Activated B cell treated with CpG ODN at 0.5 μM for 24 hours (primary cell): ENCODE measurements at regions of chr19 and their contacts with region 1.

Region 1: DNA sequence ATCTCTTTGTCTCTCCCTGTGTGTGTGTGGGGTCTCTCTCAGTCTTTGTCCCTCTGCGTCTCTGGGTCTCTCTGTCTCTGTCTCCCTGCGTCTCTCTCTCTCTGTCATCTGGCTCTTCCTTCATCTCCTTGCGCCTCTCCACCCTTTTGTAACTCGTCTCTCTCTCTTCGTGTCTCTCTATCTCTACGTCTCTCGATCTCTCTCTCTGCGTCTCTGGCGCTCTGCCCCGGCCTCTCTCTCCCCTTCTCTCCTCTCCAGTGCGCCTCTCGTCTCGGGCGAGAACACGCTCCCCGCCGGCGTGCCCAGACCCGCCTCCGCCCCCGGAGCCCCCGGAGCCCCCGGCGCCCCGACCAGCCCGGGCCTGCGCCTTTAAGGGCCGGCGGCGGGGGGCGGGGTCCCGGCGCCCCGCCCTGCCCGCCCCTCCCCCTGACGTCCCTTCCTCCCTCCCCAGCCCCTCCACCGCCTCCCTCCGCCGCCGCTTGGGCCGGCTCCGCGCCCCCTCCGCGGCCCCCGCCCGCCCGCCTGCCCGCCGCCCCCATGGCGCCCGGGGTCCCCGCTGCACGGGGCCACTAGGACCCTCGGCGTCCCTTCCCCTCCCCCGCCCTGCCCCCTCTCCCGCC is at the start of gene MARK4:
- DNase-seq: peak; percentile 56
- ATAC-seq: peak; percentile 79
- H3K4me3 Mint-ChIP-seq: peak within 1 kb of the TSS; percentile 86
- H3K27ac Mint-ChIP-seq: peak within 1 kb of the TSS; percentile 50
- H3K4me1 Mint-ChIP-seq: peaks cover 39% of the 10 kb centered on the region
- H3K27me3 Mint-ChIP-seq: no peaks in the 10 kb centered on the region
- CTCF ChIP-seq: no peak
- total RNA-seq, gene MARK4: 26.0 and 28.0 TPM in 2 replicates

Region 2: DNA sequence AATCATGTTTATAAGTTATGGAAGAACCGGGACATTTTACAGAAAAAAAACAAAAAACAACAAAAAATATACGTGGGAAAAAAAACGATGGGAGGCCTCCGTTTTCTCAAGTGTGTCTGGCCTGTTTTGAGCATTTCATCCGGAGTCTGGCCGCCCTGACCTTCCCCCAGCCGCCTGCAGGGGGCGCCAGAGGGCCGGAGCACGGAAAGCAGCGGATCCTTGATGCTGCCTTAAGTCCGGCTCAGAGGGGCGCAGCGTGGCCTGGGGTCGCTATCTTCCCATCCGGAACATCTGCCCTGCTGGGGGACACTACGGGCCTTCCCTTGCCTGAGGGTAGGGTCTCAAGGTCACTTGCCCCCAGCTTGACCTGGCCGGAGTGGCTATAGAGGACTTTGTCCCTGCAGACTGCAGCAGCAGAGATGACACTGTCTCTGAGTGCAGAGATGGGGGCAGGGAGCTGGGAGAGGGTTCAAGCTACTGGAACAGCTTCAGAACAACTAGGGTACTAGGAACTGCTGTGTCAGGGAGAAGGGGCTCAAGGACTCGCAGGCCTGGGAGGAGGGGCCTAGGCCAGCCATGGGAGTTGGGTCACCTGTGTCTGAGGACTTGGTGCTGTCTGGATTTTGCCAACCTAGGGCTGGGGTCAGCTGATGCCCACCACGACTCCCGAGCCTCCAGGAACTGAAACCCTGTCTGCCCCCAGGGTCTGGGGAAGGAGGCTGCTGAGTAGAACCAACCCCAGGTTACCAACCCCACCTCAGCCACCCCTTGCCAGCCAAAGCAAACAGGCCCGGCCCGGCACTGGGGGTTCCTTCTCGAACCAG is 347.1 kb before region 1 on chr19:
- CTCF ChIA-PET with region 1: no interaction called
- POLR2A ChIA-PET with region 1: no interaction called
- intact Hi-C with region 1: loop called (anchors 2 kb)
- DNase-seq: peak; percentile 78
- ATAC-seq: peak; percentile 68
- H3K4me3 Mint-ChIP-seq: no peak overlapping the region
- H3K27ac Mint-ChIP-seq: no peak overlapping the region
- H3K4me1 Mint-ChIP-seq: peaks cover 18% of the 10 kb centered on the region
- H3K27me3 Mint-ChIP-seq: peaks cover 15% of the 10 kb centered on the region
- CTCF ChIP-seq: peak; percentile 96

Region 3: DNA sequence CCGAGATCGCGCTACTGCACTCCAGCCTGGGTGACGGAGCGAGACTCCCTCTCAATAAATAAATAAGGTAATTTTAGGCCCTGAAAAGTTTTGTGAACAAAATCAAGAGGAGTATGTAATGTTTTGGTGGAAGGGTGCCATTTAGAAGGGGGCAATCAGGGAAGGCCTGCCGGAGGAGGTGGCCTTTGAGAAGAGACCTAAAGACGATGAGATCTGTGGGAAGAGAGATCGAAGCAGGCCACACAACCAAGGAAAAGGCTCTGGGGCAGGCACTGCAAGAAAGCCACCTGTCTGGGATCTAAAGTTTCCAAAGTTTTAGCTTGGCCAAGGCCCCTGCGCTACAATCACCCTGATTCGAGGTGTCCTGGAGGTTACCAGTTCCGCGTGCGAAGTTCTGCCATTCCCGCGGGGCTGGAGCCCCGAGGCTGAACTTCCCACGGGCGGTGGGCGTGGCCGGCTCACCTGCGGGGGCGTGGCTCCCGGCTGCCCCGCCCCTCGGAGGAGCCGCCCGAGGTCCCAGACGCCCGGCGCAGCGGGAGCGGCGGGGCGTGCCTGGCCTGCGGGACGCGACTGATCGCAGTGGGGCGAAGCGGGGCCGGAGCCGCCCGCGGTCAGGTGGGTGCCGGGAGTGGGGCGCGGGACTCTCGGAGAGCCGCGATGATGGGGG is 89.4 kb after region 1 on chr19 and contains the start of gene KLC3:
- CTCF ChIA-PET with region 1: no interaction called
- POLR2A ChIA-PET with region 1: no interaction called
- intact Hi-C with region 1: loop called (anchors 2 kb)
- DNase-seq: peak; percentile 44
- ATAC-seq: peak; percentile 60
- H3K4me3 Mint-ChIP-seq: peak within 1 kb of the TSS; percentile 53
- H3K27ac Mint-ChIP-seq: no peak within 1 kb of the TSS
- H3K4me1 Mint-ChIP-seq: peaks cover 7% of the 10 kb centered on the region
- H3K27me3 Mint-ChIP-seq: peaks cover 17% of the 10 kb centered on the region
- CTCF ChIP-seq: no peak
- total RNA-seq, gene KLC3: not detected in 2 replicates